Left cardiac atrium (tissue), 4 donors: ENCODE measurements at regions of chr12 and their contacts with region 1.

Region 1: DNA sequence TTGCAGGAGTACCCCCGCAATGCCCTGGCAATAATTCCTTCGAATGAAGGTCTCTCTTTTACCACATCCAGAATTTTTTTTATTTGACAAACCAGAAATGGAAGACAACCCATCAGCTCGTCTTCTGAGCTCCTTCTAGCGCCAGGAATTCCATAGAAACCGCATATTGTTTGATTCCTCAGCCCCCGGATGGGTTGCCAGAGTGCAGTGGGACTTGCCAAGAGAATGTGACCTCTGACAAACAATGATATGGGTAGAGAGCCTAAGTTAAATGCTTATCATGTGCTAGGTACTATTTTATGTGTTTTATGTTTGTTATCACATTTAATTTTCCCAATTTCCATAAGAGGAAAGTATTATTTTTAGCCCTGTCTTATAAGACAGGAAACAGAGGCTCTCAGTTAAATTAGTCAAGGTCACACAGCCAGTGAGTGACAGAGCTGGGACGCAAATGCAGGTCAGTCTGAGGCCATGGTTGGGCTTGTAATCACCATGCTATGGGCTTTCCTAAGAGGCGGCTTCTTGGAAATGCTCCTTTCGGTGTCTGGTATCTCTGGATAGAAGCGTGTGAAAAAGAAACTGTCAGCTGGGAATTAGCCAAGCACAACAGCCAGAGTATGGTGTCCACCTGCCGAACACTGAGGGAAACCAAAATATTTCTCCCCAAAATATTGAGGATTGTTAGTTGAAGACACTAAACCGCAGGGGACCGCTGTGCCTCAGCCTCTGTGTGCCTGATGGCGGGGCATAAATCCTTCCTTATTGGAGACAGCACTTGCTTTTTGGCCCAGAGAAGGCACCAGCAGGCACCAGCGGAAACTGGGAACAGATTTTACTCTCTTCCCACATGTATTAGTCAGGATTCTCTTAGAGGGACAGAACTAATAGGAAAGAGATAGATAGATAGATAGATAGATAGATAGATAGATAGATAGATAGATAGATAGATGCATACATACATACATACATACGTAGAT is 29.4 kb upstream of the ETFBKMT start:
- DNase-seq: peak; percentile 60
- ATAC-seq: peak; percentile 90 to 96

Region 2: DNA sequence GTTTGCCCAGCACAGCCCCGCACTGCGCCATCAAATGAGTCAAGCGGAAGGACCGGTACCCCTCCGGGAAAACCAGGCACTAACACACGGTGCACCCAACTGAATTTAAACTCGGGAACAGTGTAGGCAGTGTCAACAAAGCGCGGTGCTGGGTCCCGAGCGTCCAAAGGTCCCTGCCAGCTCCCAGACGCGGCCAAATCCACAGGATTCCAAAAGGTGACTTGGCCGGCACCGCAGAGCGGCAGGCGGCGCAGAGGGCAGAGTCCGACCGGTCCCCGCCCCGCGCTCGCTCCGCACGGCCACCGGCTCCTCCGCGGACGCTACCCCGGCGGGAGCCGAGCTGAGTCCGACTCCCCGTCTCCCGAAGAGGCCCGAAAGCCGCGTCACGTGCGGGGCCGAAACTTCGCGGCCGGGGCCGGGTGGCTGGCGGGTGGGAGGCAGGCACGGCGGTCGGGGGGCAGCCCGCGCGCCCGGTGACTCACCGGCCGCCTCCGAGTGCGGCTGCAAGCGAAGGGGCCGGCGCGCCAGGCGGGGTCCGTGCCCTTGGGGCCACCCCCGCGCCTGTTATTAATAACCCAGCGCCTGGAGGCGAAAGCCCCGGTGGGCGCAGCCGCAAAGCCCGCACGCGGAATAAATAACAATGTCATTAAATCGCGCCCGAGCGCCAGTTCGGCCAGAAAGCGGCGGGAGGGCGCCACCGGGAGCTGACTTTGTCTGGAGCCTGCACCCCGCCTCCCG is 40.0 kb before region 1 on chr12:
- intact Hi-C with region 1: loop called in 1 of 2 experiments (anchors 5 kb)
- DNase-seq: peak; percentile 75
- ATAC-seq: peak; percentile 60 to 80